Tibial artery (tissue), 4 donors: ENCODE measurements at regions of chr11 and their contacts with region 1.

Region 1: DNA sequence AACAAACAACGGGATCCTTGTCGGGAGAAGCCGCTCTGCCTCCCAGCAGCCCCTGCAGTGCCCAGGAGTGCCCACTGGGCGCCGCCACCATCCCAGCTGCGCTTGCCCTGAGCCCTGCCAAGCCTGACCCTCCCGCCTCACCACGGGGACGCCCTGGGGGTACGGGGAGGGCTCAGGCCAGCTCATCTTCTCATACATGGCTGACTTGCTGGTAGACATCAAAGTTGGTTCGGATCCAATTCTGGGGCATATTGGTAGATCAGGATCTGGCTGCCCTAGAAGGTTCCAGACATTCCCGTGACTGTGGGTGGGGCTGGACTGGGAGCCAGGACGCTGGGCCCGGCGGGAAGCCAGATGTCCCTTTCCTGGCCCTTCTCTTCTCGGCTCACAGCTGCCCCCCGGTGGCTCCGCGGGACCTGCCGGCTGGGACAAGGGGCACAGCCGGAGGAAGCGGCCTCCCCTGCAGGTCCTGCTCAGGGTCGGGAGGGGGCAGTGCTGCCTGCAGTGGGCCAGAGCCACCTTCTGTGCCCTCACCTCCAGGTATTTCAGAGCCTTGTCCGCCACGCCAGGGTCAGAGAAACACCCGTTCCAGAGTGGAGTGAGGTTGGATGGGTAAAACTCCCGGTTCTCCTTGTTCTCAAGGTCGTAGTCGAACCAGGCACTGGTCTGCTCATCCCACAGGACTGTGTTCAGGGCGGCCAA is 10.6 kb upstream of the TREH start:
- DNase-seq: peak; percentile 76 to 97
- H3K4me3 ChIP-seq: peak overlapping the region; percentile 41 to 42
- H3K27ac ChIP-seq: peak overlapping the region; percentile 71 to 72
- H3K4me1 ChIP-seq: peaks cover 0 to 17% (median 12%) of the 10 kb centered on the region in 4 donors
- H3K27me3 ChIP-seq: no peaks in the 10 kb centered on the region
- CTCF ChIP-seq: peak; percentile 83 to 90

Region 2: DNA sequence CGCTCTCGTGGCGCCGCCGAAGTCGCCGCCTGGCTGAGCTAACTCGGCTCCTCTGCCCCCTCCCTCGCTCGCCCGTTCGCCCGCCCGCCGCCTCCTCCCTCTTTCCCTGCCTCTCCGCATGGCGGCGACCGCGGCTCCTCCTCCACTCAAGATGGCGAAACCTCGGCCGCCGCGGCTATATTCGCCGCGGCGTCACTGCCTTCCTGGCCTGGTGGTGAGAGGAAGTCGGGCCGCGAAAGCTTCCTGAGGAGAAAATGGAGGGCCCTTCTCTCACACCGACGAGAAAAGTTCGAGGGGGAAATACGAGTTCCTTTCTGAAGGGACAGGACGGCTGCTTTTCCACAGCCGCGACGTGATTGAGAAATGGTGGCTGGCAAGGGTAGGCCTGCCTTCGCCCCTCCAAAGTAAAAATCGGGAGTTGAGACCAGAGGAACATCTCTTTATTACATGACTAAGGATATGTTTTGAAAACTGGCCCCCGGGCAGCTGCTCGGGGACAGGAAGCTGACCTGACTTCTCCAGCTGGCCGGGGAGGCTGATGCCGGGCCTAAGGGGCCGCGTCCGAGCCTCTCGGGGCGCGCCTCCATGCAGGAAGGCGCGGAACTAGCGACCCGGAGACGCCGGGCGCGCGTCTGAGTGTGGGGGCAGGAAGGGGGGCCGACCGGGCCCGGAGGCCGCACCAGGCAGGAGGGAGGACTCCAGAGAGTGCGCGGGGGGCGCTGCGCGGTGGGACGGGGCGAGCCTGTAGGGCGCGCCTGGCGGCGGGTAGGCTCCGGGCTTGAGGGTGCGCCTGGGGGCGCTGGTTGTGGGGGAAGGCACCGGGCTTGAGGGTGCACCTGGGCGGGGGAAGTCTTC is 101.3 kb after region 1 on chr11 and contains the start of gene DDX6:
- intact Hi-C with region 1: loop called (anchors 10 kb)
- DNase-seq: peak; percentile 93 to 96
- H3K4me3 ChIP-seq: peak within 1 kb of the TSS; percentile 83 to 94
- H3K27ac ChIP-seq: peak within 1 kb of the TSS; percentile 96 to 100
- H3K4me1 ChIP-seq: peaks cover 0 to 31% (median 20%) of the 10 kb centered on the region in 4 donors
- H3K27me3 ChIP-seq: no peaks in the 10 kb centered on the region
- CTCF ChIP-seq: peak in 1 of 2 experiments; percentile 26

Region 3: GRCh38 chr11:118939953-118940598 is 250.1 kb after region 1 on chr11:
- intact Hi-C with region 1: loop called (anchors 5 kb)
- DNase-seq: no peak
- H3K4me3 ChIP-seq: no peak overlapping the region
- H3K27ac ChIP-seq: no peak overlapping the region
- H3K4me1 ChIP-seq: no peaks in the 10 kb centered on the region
- H3K27me3 ChIP-seq: peaks cover 0 to 7% of the 10 kb centered on the region in 2 donors
- CTCF ChIP-seq: no peak

Region 4: GRCh38 chr11:118956094-118956846 is 266.3 kb after region 1 on chr11 and contains the start of gene UPK2:
- intact Hi-C with region 1: loop called (anchors 2 kb)
- DNase-seq: peak; percentile 84 to 91
- H3K4me3 ChIP-seq: no peak within 1 kb of the TSS
- H3K27ac ChIP-seq: no peak within 1 kb of the TSS
- H3K4me1 ChIP-seq: no peaks in the 10 kb centered on the region
- H3K27me3 ChIP-seq: peaks cover 0 to 18% of the 10 kb centered on the region in 2 donors
- CTCF ChIP-seq: peak; percentile 91 to 99

Region 5: DNA sequence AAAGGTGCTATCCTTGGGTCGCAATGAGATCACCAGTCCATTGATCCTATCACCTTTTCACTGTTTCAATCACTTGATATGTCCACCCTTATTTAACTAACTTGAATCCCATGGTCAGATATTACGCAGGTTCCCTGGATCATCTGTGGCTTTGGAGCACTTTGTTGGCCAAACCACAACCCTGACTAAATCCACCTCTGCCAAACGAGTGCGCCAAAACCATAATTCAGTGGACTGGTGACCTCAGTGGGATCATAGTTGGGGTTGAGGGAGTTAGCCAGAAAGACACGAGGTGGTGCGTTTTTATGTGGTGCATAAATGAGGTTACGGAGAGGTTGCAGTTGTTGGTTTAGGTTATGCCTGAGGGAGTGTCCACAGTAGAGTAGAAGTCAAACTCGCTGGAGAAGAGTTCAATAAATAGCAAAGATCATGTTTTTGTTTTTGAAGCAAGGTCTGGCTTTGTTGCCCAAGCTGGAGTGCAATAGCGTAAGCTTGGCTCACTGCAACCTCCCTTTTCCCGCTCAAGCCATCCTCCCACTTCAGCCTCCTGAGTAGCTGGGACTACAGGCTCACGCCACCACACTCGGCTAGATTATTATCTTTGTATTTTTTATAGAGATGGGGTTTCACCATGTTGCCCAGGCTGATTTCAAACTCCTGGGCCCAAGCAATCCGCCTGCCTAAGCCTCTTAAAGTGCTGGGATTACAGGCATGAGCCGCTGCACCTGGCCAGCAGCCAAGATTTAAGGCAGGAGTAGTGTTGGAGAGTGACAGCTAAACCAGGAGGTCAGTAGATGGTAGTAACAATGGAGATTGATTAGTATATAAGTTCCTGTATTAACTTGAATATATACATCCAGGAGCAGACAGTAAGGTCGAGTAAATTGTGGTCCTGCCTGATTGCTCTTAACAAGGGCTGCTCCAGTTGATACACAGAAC is 286.0 kb after region 1 on chr11:
- intact Hi-C with region 1: no loop called
- DNase-seq: no peak
- H3K4me3 ChIP-seq: no peak overlapping the region
- H3K27ac ChIP-seq: no peak overlapping the region
- H3K4me1 ChIP-seq: peaks cover 0 to 7% (median 2%) of the 10 kb centered on the region in 4 donors
- H3K27me3 ChIP-seq: peaks cover 0 to 16% of the 10 kb centered on the region in 2 donors
- CTCF ChIP-seq: no peak